ENCODE measurements at regions of chr6 and their contacts with region 1.

Region 1: DNA sequence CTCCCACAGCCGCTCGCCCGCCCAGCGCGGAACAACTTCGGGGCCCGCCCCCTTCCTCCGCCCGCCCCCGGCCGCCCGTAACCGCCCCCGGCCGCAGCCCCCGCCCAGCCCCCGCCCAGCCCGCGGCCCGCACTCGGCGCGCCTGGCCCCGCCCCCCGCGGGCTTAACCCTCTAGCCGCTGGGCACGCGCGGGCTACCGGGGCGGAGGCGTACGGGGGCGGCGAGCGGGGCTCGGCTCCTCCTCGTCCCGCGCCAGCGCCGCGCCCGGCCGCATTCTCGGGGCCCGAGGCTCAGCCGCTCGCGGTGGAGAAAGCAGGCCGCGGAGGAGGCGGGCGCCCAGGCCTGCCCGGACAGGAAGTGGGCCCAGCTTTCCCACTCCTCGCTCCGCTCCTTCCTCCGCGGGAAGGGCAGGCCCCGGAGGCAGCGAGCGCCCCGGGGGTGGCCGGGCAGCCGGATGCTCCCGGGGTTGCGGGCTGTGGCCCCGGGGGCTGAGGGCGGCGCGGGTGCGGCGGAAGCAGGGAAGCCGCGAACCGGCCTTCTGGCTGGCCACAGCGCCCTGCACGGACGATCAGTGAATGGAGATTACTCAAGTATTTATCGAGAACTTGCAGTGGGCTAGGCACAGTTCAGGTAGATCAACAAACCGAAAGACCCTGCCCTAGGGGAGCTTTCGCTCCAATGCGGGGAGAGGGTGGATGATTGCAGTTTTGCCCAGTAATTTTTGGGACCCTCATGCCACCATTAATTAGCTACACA is at the start of gene TRAM2:
- DNase-seq: peak; percentile 84 to 87
- H3K4me3 ChIP-seq: peak within 1 kb of the TSS; percentile 69 to 75
- H3K27ac ChIP-seq: peak within 1 kb of the TSS; percentile 94 to 99
- H3K4me1 ChIP-seq: peaks cover 5 to 7% of the 10 kb centered on the region in 2 donors
- H3K27me3 ChIP-seq: no peaks in the 10 kb centered on the region
- CTCF ChIP-seq: peak in 2 of 4 experiments; percentile 20 to 24
- POLR2A ChIP-seq: peak; percentile 21 to 69
- total RNA-seq, gene TRAM2: 3.8 to 33.2 (median 17.6) TPM

Region 2: GRCh38 chr6:52517502-52518278 is 59.5 kb before region 1 on chr6:
- intact Hi-C with region 1: loop called (anchors 10 kb)
- DNase-seq: peak; percentile 92 to 94
- H3K4me3 ChIP-seq: no peak overlapping the region
- H3K27ac ChIP-seq: peak overlapping the region; percentile 89 to 94
- H3K4me1 ChIP-seq: peaks cover 11 to 22% of the 10 kb centered on the region in 2 donors
- H3K27me3 ChIP-seq: no peaks in the 10 kb centered on the region
- CTCF ChIP-seq: no peak
- POLR2A ChIP-seq: peak; percentile 14 to 53

Measured in uterus (tissue), 4 donors.